WTC11 (cell line): ENCODE measurements at regions of chr13 and their contacts with region 1.

Region 1: GRCh38 chr13:26946684-26947343 is 186.2 kb upstream of the GPR12 start:
- DNase-seq: no peak
- ATAC-seq: peak; percentile 72
- H3K4me3 Mint-ChIP-seq: no peak overlapping the region
- H3K27ac Mint-ChIP-seq: no peak overlapping the region
- H3K4me1 Mint-ChIP-seq: peaks cover 5% of the 10 kb centered on the region
- H3K27me3 Mint-ChIP-seq: no peaks in the 10 kb centered on the region
- CTCF ChIP-seq: no peak; the same call in 1 of the 2 replicates

Region 2: GRCh38 chr13:25088562-25089221 is 1858.1 kb before region 1 on chr13:
- CTCF ChIA-PET with region 1: no interaction called
- POLR2A ChIA-PET with region 1: no interaction called
- DNase-seq: no peak
- ATAC-seq: no peak
- H3K4me3 Mint-ChIP-seq: no peak overlapping the region
- H3K27ac Mint-ChIP-seq: no peak overlapping the region
- H3K4me1 Mint-ChIP-seq: peaks cover 8% of the 10 kb centered on the region
- H3K27me3 Mint-ChIP-seq: no peaks in the 10 kb centered on the region
- CTCF ChIP-seq: no peak

Region 3: DNA sequence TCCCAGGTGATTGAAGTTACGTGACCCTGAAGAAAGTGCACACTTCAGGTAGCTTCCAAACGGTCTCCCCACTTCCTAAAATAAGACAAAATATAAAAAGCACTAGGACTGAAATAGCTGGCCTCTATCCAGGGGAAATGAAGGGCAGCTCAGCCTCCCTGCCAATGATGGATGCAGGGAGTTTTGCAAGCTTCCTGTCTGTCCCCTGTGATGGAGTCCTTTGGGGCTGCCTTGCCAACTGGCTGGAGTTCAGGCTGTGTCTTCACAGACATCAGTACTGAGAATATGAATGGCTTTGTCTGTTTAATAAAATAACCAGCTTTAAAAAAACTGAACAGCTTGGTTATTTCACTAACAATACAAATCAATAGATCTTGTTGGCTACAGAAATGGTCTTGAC is 84.9 kb before region 1 on chr13:
- CTCF ChIA-PET with region 1: no interaction called
- POLR2A ChIA-PET with region 1: no interaction called
- DNase-seq: no peak
- ATAC-seq: no peak
- H3K4me3 Mint-ChIP-seq: no peak overlapping the region
- H3K27ac Mint-ChIP-seq: no peak overlapping the region
- H3K4me1 Mint-ChIP-seq: no peaks in the 10 kb centered on the region
- H3K27me3 Mint-ChIP-seq: no peaks in the 10 kb centered on the region; the same call in 1 of the 2 replicates
- CTCF ChIP-seq: no peak

Region 4: GRCh38 chr13:26957182-26957581 is 10.4 kb after region 1 on chr13:
- CTCF ChIA-PET with region 1: interaction called, 17 read pairs
- POLR2A ChIA-PET with region 1: no interaction called
- DNase-seq: no peak
- ATAC-seq: no peak
- H3K4me3 Mint-ChIP-seq: no peak overlapping the region
- H3K27ac Mint-ChIP-seq: no peak overlapping the region
- H3K4me1 Mint-ChIP-seq: no peaks in the 10 kb centered on the region
- H3K27me3 Mint-ChIP-seq: no peaks in the 10 kb centered on the region
- CTCF ChIP-seq: no peak

Region 5: DNA sequence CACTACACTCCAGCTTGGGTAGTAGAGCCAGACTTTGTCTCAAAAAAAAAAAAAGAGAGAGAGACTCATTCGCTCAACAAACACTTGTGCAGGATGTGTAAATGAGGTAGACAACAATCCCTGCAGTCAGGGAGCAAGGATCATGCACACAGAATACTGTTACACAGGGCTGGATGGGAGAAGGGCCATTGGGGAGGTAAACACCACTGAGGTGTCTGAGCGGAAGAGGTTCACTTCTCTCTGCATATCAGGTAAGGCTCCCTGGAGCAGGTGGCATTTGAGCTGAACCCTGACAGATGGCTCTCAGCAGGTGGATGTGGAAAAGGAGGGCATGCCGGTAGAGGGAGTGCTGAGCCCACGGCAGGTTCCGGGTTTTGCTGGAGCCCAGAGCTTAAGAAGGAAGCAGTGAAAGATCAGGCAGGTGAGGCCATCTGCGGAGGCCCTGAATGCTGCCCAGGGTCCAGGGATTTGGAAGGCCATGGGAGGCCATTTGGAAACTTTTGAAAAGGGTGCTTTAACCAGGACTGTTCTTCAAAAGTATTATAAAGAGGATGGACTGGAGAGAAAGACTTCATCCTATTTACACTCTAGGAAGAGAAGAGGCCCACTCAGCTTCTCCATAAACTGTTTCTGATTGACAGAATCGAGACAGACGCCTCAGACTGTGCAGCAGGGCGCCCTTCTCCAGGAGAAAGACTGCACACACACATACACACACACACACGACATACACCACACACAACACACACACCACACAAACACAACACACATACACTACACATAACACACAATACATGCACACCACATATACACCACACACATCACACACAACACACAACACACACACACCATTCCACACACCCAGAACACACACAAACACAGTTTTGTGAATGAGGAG is 25.4 kb after region 1 on chr13:
- CTCF ChIA-PET with region 1: interaction called, 40 read pairs
- POLR2A ChIA-PET with region 1: interaction called, 3 read pairs
- DNase-seq: peak; percentile 61
- ATAC-seq: peak; percentile 89
- H3K4me3 Mint-ChIP-seq: no peak overlapping the region
- H3K27ac Mint-ChIP-seq: no peak overlapping the region
- H3K4me1 Mint-ChIP-seq: no peaks in the 10 kb centered on the region; the same call in 1 of the 2 replicates
- H3K27me3 Mint-ChIP-seq: no peaks in the 10 kb centered on the region
- CTCF ChIP-seq: peak; percentile 15; the same call in 1 of the 2 replicates

Region 6: DNA sequence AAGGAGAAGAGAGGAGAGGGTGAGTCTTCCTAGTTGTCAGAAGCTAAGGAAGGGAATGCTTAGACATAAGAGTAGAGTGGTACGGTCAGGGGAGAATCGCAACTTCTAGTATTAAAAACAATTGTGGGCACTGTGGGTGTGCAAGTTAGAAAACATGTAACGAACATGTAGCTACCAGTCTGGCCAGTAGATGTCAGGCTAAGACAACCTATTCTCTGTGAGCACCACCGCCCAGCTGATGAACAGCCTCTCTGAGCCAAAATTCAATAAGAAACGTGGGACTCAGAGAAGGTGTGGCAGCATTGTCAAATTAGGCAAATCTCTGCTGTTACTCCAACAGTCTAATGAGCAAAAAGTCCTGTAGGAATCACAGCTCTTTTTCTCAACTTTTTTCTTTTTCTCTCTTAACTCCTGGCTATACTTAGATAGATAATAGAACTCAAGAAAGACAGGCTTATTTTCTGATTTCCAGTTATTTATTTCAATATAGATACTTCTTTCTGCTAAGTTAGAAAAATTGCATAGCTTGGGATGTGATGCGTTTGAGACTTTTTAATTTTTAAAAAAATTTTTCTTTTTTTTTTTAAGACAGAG is 38.6 kb after region 1 on chr13:
- CTCF ChIA-PET with region 1: interaction called, 45 read pairs
- POLR2A ChIA-PET with region 1: interaction called, 4 read pairs
- DNase-seq: peak; percentile 64
- ATAC-seq: peak; percentile 80
- H3K4me3 Mint-ChIP-seq: no peak overlapping the region
- H3K27ac Mint-ChIP-seq: no peak overlapping the region
- H3K4me1 Mint-ChIP-seq: peaks cover 12% of the 10 kb centered on the region
- H3K27me3 Mint-ChIP-seq: no peaks in the 10 kb centered on the region; the same call in 1 of the 2 replicates
- CTCF ChIP-seq: peak; percentile 60

Region 7: GRCh38 chr13:27339299-27339698 is 392.5 kb after region 1 on chr13:
- CTCF ChIA-PET with region 1: interaction called, 18 read pairs
- POLR2A ChIA-PET with region 1: no interaction called
- DNase-seq: peak; percentile 75
- ATAC-seq: peak; percentile 85
- H3K4me3 Mint-ChIP-seq: no peak overlapping the region
- H3K27ac Mint-ChIP-seq: no peak overlapping the region
- H3K4me1 Mint-ChIP-seq: peaks cover 50% of the 10 kb centered on the region
- H3K27me3 Mint-ChIP-seq: no peaks in the 10 kb centered on the region; the same call in 1 of the 2 replicates
- CTCF ChIP-seq: peak; percentile 43

Region 8: DNA sequence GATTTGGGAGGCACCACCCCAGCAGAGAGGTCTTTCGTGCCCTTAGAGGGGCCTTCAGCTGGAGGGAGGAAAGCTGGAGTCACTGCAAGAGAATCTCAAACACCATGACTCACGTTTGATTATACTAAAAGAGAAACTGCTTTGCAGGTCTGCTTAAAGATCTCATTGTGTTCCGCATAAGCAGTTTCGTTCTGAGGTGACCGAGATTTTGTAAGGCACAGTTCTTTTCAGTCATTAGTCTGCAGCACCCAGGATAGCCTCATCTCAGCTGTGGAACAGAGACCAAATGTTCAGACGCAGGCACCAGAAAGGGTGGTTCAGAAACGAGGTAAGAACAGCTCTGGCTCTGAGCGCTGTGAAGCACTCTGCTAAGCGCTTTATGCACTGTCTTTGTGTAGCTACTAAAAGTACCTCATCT is 406.4 kb after region 1 on chr13:
- CTCF ChIA-PET with region 1: interaction called, 77 read pairs
- POLR2A ChIA-PET with region 1: no interaction called
- DNase-seq: no peak
- ATAC-seq: no peak
- H3K4me3 Mint-ChIP-seq: no peak overlapping the region
- H3K27ac Mint-ChIP-seq: 0 out of 2 replicates have a peak overlapping the region, but pooled peaks have one; percentile 12
- H3K4me1 Mint-ChIP-seq: peaks cover 25% of the 10 kb centered on the region
- H3K27me3 Mint-ChIP-seq: no peaks in the 10 kb centered on the region; the same call in 1 of the 2 replicates
- CTCF ChIP-seq: no peak